HAP-1 (cell line): ENCODE measurements at regions of chr4 and their contacts with region 1.

Region 1: DNA sequence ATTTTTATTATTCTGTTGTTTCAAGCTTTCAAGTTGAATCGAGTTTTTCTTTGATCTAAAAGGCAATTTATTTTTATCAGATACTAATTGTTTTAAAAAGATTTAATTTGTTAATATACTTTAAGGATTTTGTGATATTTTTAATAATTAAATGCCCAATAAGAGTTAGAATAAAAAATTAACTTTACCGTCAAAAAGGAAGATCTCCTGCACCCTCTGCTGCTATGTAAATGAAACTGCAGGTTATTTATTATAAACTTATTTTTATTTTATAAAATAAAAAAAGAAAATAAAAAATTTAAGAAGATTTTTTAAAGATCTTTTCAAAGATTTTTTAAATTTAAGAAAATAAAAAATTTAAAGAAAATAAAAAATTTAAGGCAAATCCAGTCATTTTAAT is 166.1 kb downstream of the CCSER1 start:
- DNase-seq: peak in 1 of 2 experiments; percentile 11
- H3K4me3 ChIP-seq: no peak overlapping the region
- H3K4me1 ChIP-seq: no peaks in the 10 kb centered on the region
- H3K27me3 ChIP-seq: no peaks in the 10 kb centered on the region

Region 2: DNA sequence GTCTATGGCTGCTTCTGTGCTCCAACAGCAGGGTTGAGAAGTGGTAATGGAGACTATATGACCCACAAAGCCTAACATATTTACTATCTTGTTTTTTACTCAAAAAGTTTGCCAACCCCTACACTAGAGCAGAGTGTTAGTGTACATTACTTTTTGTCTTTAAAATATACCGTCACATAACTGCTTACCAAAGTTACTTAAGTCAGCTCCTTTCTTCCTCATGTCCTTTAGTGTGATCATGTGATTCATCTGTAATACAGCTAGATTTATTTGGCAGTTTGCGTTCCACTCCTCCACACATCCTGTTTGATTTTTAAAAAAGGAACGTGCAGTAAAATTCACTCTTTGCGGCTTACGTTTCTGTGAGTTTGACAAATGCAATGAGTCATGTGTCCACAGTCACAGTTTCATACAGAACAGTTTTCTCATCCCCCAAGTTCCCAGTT is 823.4 kb before region 1 on chr4:
- in situ Hi-C with region 1: loop called (anchors 25 kb)
- DNase-seq: no peak
- H3K4me3 ChIP-seq: no peak overlapping the region
- H3K4me1 ChIP-seq: peaks cover 4% of the 10 kb centered on the region; the same call in 1 of the 2 replicates
- H3K27me3 ChIP-seq: no peaks in the 10 kb centered on the region

Region 3: DNA sequence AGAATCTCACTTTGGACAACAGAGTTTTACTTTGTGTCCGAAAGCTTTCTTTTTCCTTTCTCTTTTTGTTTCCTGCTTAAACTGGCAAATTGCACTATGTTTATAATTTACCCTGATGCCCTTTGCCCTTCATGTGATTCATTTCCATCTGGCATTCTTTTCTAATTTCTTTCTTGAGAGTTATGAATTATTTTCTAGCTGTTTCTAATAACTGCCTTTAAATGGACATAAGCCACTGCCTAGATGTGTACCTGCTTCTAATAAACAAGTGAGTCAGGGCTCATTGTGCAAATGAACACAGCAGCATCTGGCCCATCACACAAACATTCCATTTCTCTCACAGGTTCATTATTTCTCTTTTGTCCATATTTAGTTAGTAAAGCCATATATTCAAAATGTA is 743.4 kb before region 1 on chr4:
- in situ Hi-C with region 1: no loop called
- DNase-seq: no peak
- H3K4me3 ChIP-seq: no peak overlapping the region
- H3K4me1 ChIP-seq: peaks cover 13% of the 10 kb centered on the region
- H3K27me3 ChIP-seq: no peaks in the 10 kb centered on the region

Region 4: DNA sequence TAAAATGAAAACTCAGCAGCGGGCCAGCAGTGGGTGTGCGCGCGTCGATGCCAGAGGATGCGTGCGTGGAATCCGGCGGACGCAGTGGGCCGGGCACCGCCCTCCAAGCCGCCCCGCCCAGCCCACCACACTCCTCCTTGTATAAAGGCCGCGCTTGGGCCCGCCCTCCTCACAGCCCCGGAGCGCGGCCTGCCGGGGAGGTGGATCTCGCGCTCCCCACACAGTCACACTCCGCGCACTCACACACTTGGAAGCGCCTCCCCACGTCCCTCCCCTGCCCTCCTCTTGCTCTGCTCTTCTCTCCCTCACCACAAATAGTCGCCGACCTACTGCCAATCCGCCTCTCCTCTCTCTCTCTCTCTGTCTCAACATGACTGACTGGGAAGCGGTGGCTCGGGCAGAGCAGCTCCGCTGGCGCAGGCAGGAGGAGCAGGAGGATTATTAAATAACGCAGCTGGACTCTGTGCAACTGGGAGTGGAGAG is 166.1 kb before region 1 on chr4 and contains the start of gene CCSER1:
- in situ Hi-C with region 1: loop called (anchors 10 kb)
- DNase-seq: peak; percentile 74 to 87
- H3K4me3 ChIP-seq: peak within 1 kb of the TSS; percentile 47
- H3K4me1 ChIP-seq: peaks cover 12% of the 10 kb centered on the region
- H3K27me3 ChIP-seq: no peaks in the 10 kb centered on the region

Region 5: DNA sequence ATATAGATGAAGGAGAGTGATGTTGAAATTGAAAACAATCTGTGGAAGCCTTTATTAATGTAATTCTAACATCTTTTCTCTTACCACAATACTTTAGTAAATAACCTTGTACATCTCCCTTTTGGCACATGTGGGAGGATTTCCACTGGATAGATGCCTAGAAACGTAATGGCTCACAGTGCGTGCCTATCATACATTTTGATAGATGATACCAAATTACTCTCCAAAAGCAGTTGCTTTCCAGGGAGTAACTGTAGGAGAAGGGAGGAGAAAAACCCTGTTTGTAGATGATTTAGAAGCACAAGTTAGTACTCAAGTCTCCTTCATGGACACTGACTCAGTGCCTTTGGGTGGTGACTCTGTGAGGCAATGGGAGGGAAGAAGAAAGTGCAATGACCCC is 310.2 kb after region 1 on chr4:
- in situ Hi-C with region 1: no loop called
- DNase-seq: no peak
- H3K4me3 ChIP-seq: no peak overlapping the region
- H3K4me1 ChIP-seq: peaks cover 3% of the 10 kb centered on the region; the same call in 1 of the 2 replicates
- H3K27me3 ChIP-seq: no peaks in the 10 kb centered on the region

Region 6: GRCh38 chr4:90715242-90715641 is 421.9 kb after region 1 on chr4:
- in situ Hi-C with region 1: no loop called
- DNase-seq: no peak
- H3K4me3 ChIP-seq: no peak overlapping the region
- H3K4me1 ChIP-seq: no peaks in the 10 kb centered on the region
- H3K27me3 ChIP-seq: no peaks in the 10 kb centered on the region